Left lung (tissue), 14 donors: ENCODE measurements at regions of chr19 and their contacts with region 1.

Region 1: DNA sequence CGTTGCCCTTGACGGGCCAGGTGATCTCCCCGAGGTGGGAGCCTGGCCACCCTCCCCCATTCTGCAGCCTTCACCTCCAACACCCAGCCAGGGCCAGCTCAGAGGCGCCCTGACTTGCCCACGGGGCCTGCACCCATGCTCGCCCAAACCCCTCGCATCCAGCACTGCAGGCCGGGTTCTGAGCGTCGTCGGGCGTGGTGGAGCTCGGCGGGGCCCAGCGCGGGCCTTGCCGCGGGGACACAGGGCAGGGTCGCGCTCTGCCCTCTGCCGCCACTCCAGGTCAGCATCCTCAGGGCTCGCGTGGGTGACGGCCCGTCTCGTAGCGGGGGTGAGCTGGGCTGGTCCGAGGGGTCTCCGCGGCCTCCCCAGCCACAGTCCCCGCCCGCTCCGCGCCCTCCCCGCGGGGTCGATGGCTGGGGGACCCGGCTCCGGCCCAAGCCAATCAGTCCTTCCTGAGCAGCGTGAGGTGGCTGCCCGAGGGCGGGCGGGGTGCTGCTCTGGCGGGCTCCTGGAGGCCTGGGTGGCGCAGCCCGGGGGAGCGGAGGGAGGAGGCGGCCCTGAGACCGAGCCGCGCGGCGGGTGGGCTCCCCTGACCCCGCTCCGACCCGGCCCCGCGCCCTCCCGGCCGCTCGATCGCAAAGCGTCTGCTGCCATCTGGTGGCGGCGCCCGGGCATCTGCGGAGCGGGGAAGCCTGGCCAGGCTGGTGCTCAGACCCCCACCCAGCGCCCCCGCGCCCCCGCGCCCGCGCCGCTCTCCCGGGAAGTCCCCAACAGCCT is 61.4 kb downstream of the CCNE1 start:
- DNase-seq: peak; percentile 23 to 93 (median 48)
- ATAC-seq: peak; percentile 90
- H3K4me3 ChIP-seq: peak overlapping the region; percentile 25 to 30
- H3K27ac ChIP-seq: no peak overlapping the region
- H3K4me1 ChIP-seq: peaks cover 6 to 18% of the 10 kb centered on the region in 2 donors
- H3K27me3 ChIP-seq: peaks cover 0 to 73% of the 10 kb centered on the region in 2 donors
- CTCF ChIP-seq: peak; percentile 87 to 91

Region 2: GRCh38 chr19:29761575-29762232 is 111.5 kb before region 1 on chr19:
- intact Hi-C with region 1: loop called in 1 of 2 experiments (anchors 10 kb)
- DNase-seq: peak in 1 of 4 donors; percentile 41
- ATAC-seq: no peak
- H3K4me3 ChIP-seq: no peak overlapping the region
- H3K27ac ChIP-seq: no peak overlapping the region
- H3K4me1 ChIP-seq: no peaks in the 10 kb centered on the region
- H3K27me3 ChIP-seq: peaks cover 0 to 17% of the 10 kb centered on the region in 2 donors
- CTCF ChIP-seq: no peak